CD4-positive, alpha-beta memory T cell (primary cell): ENCODE measurements at regions of chr16 and their contacts with region 1.

Region 1: DNA sequence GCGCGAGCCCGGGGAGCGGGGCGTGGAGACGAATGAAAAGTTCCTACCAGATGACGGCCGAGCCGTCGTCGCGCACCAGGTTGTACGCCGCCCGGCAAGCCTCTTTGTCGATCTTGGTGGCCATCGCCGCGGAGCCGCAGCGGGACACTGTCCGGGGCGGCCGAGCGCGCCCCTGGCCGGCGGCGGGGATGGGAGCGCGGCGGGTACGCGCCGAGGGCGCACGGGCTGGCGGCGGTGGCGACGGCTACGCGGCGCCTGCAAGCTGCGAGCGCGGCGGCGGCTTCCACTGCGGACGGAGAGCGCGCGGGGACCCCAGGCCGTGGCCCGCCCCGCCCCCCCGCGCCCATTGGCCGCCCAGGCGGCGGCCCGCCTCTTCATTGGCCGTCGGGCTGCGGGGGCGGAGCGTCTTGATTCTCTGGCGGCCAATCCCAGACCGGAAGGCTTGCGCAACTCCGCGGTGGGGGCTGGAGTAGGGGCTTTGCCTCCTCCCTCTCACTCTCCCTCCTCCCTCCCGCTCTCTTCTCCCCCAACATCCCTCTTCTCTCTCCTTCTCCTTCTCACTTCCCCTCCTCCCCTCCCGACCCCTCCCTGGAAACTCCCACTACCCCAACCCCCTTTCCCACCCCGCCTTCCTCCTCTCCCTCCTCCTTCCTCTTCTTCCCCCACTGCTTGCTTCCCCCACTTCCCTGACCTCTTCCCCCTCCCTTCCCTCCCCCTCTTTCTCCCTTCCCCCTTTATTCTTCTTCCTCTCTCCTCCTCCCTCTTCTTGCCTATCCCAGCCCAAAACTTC is at the start of gene COTL1:
- DNase-seq: peak; percentile 91 to 94 (median 91)
- H3K4me3 ChIP-seq: peak within 1 kb of the TSS; percentile 71 to 91
- H3K4me3 Mint-ChIP-seq: peak within 1 kb of the TSS; percentile 95 to 97 (median 96)
- H3K27ac ChIP-seq: peak within 1 kb of the TSS; percentile 64
- H3K27ac Mint-ChIP-seq: peak within 1 kb of the TSS; percentile 90 to 97 (median 94)
- H3K4me1 ChIP-seq: peaks cover 39% of the 10 kb centered on the region
- H3K4me1 Mint-ChIP-seq: peaks cover 35 to 53% (median 45%) of the 10 kb centered on the region in 4 donors
- H3K27me3 ChIP-seq: no peaks in the 10 kb centered on the region
- H3K27me3 Mint-ChIP-seq: no peaks in the 10 kb centered on the region
- total RNA-seq, gene COTL1: 181 to 186 TPM

Region 2: DNA sequence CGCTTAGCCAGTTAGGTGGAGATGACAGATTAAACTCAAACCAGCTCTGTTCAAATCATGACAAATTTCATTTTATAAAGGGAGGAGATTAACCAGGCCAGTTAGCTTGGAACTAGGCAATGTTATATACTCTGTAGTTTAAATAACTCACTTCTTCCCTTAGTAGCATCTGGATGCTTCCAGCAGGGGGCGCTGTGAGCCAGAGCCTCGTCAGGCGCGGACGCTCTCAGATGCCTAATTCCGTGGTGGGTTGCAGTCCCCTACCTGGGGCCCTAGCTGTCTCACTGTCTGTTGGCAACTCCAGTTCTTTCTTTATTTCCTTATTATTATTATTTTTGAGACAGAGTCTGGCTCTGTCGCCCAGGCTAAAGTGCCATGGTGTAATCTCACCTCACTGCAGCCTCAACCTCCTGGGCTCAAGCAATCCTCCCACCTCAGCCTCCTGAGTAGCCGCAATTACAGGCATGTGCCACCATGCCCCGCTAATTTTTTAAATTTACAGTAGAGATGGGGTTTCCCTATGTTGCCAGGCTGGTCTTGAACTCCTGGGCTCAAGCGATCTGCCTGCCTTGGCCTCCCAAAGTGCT is 340.7 kb before region 1 on chr16:
- CTCF ChIA-PET with region 1: no interaction called
- POLR2A ChIA-PET with region 1: no interaction called
- intact Hi-C with region 1: loop called (anchors 1 kb)
- DNase-seq: peak; percentile 45 to 59 (median 55)
- H3K4me3 ChIP-seq: no peak overlapping the region
- H3K4me3 Mint-ChIP-seq: no peak overlapping the region
- H3K27ac ChIP-seq: no peak overlapping the region
- H3K27ac Mint-ChIP-seq: no peak overlapping the region
- H3K4me1 ChIP-seq: no peaks in the 10 kb centered on the region
- H3K4me1 Mint-ChIP-seq: peaks cover 0 to 1% (median 0%) of the 10 kb centered on the region in 4 donors
- H3K27me3 ChIP-seq: peaks cover 3% of the 10 kb centered on the region
- H3K27me3 Mint-ChIP-seq: peaks cover 10 to 18% of the 10 kb centered on the region in 2 donors

Region 3: DNA sequence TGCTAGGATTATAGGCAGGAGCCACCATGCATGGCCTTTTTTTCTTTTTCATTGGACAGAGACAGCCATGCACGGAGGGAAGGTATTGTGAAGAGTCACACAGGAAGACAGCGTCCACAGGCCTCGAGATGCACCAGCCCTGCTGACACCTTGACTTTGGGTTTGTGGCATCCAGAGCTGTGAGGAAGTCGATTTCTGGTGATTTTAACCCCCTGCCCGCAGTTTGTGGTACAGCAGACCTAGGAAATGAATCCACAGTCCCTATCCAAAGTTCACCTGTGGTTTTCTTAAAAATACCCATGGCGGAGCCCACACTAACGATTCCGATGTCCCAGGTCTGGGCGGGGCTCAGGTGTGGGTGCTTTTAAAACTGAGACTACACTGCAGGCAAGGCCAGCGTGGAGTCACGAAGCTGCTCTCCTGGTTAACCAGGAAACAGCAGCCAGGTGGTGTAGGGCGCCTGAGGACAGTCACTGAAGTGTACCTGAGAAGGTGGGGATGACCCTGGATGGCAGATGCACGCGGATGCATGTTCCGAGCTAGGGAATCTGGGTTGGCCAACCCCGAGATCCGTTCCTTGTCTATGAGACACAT is 99.1 kb before region 1 on chr16:
- CTCF ChIA-PET with region 1: interaction called, 358 read pairs
- POLR2A ChIA-PET with region 1: interaction called, 113 read pairs
- intact Hi-C with region 1: loop called (anchors 1 kb)
- DNase-seq: peak; percentile 75 to 89 (median 77)
- H3K4me3 ChIP-seq: peak overlapping the region in 1 of 2 donors; percentile 27
- H3K4me3 Mint-ChIP-seq: peak overlapping the region; percentile 35 to 70 (median 46)
- H3K27ac ChIP-seq: peak overlapping the region; percentile 37
- H3K27ac Mint-ChIP-seq: peak overlapping the region; percentile 84 to 92 (median 91)
- H3K4me1 ChIP-seq: peaks cover 61% of the 10 kb centered on the region
- H3K4me1 Mint-ChIP-seq: peaks cover 42 to 67% (median 54%) of the 10 kb centered on the region in 4 donors
- H3K27me3 ChIP-seq: no peaks in the 10 kb centered on the region
- H3K27me3 Mint-ChIP-seq: no peaks in the 10 kb centered on the region

Region 4: DNA sequence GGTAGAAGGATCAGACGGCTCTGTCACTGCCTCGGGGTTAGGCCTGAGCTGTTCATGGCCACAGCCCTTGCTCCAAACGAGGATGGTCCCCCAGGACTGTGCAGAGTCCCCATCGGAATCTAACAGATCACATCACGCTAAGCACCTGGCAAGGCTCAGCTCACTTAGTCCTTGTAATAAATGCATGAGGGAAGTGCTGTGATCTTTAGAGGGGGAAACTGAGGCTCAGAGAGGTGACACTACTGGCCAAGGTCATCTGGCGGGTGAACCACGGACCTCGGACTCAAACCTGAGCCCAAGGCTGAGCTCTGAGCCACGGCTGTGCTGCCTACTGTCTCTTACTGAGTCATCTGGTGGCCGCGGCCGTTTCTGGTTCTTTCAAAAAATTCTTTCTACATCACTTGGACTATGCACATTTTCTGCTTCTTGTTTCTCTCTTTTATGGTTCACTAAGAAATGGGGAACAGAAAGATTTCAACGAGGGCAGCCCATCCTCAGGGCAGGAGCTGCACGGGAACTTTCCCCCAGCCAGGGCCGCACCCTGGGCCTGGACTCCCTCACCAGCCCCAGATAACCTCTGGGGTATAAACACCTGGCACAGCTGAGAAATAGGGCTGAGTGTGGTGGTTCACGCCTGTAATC is 55.7 kb before region 1 on chr16:
- CTCF ChIA-PET with region 1: interaction called, 10 read pairs
- POLR2A ChIA-PET with region 1: interaction called, 4 read pairs
- intact Hi-C with region 1: no loop called
- DNase-seq: no peak
- H3K4me3 ChIP-seq: no peak overlapping the region
- H3K4me3 Mint-ChIP-seq: peak overlapping the region in 1 of 8 donors; percentile 31
- H3K27ac ChIP-seq: no peak overlapping the region
- H3K27ac Mint-ChIP-seq: peak overlapping the region in 1 of 7 donors; percentile 8
- H3K4me1 ChIP-seq: no peaks in the 10 kb centered on the region
- H3K4me1 Mint-ChIP-seq: peaks cover 0 to 6% (median 4%) of the 10 kb centered on the region in 4 donors
- H3K27me3 ChIP-seq: no peaks in the 10 kb centered on the region
- H3K27me3 Mint-ChIP-seq: no peaks in the 10 kb centered on the region

Region 5: GRCh38 chr16:84607694-84608093 is 10.3 kb before region 1 on chr16:
- CTCF ChIA-PET with region 1: interaction called, 7 read pairs
- POLR2A ChIA-PET with region 1: interaction called, 530 read pairs
- intact Hi-C with region 1: loop called (anchors 1 kb)
- DNase-seq: peak in 4 of 5 donors; percentile 49 to 63 (median 52)
- H3K4me3 ChIP-seq: peak overlapping the region; percentile 18 to 31
- H3K4me3 Mint-ChIP-seq: peak overlapping the region; percentile 64 to 86 (median 76)
- H3K27ac ChIP-seq: peak overlapping the region; percentile 62
- H3K27ac Mint-ChIP-seq: peak overlapping the region; percentile 84 to 99 (median 92)
- H3K4me1 ChIP-seq: peaks cover 98% of the 10 kb centered on the region
- H3K4me1 Mint-ChIP-seq: peaks cover 78 to 97% (median 91%) of the 10 kb centered on the region in 4 donors
- H3K27me3 ChIP-seq: no peaks in the 10 kb centered on the region
- H3K27me3 Mint-ChIP-seq: no peaks in the 10 kb centered on the region

Region 6: DNA sequence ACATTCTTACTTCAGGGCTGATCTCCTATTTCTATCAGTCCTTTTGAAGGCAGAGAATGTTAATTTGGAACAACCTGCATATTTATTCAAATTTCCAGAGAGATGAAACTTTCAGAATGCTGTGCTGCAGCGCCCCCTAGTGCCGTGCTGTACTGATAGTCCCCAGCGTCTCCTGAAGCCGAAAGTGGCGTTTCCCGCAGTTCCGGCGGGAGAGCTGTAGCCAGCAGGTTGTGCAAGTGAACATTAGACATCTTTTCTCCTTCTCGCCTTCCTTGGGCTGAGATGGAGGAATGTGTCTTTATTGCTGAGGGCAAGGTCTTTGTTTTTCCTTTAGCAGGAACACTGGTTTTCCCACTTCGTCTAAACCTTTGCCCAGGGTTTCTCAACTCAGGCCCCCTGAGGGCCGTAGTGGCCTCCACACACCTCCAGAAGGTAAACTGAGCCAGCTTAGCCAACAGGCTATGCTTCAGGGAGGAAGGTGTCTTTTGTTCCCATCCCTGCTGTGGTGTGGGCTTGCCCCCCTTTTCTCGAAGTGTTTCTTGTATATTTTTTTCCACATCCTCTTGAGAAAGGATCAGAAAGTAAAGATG is 108.2 kb after region 1 on chr16:
- CTCF ChIA-PET with region 1: interaction called, 70 read pairs
- POLR2A ChIA-PET with region 1: no interaction called
- intact Hi-C with region 1: loop called (anchors 1 kb)
- DNase-seq: peak; percentile 70 to 80 (median 76)
- H3K4me3 ChIP-seq: no peak overlapping the region
- H3K4me3 Mint-ChIP-seq: peak overlapping the region in 6 of 8 donors; percentile 33 to 76 (median 56)
- H3K27ac ChIP-seq: no peak overlapping the region
- H3K27ac Mint-ChIP-seq: peak overlapping the region in 4 of 7 donors; percentile 45 to 66 (median 52)
- H3K4me1 ChIP-seq: peaks cover 47% of the 10 kb centered on the region
- H3K4me1 Mint-ChIP-seq: peaks cover 40 to 67% (median 57%) of the 10 kb centered on the region in 4 donors
- H3K27me3 ChIP-seq: no peaks in the 10 kb centered on the region
- H3K27me3 Mint-ChIP-seq: no peaks in the 10 kb centered on the region

Region 7: GRCh38 chr16:84836234-84836647 is 218.3 kb after region 1 on chr16:
- CTCF ChIA-PET with region 1: no interaction called
- POLR2A ChIA-PET with region 1: no interaction called
- intact Hi-C with region 1: no loop called
- DNase-seq: no peak
- H3K4me3 ChIP-seq: no peak overlapping the region
- H3K4me3 Mint-ChIP-seq: no peak overlapping the region
- H3K27ac ChIP-seq: no peak overlapping the region
- H3K27ac Mint-ChIP-seq: no peak overlapping the region
- H3K4me1 ChIP-seq: no peaks in the 10 kb centered on the region
- H3K4me1 Mint-ChIP-seq: peaks cover 0 to 4% (median 1%) of the 10 kb centered on the region in 4 donors
- H3K27me3 ChIP-seq: no peaks in the 10 kb centered on the region
- H3K27me3 Mint-ChIP-seq: peaks cover 5 to 16% of the 10 kb centered on the region in 2 donors